ENCODE measurements at regions of chr7 and their contacts with region 1.

Region 1: DNA sequence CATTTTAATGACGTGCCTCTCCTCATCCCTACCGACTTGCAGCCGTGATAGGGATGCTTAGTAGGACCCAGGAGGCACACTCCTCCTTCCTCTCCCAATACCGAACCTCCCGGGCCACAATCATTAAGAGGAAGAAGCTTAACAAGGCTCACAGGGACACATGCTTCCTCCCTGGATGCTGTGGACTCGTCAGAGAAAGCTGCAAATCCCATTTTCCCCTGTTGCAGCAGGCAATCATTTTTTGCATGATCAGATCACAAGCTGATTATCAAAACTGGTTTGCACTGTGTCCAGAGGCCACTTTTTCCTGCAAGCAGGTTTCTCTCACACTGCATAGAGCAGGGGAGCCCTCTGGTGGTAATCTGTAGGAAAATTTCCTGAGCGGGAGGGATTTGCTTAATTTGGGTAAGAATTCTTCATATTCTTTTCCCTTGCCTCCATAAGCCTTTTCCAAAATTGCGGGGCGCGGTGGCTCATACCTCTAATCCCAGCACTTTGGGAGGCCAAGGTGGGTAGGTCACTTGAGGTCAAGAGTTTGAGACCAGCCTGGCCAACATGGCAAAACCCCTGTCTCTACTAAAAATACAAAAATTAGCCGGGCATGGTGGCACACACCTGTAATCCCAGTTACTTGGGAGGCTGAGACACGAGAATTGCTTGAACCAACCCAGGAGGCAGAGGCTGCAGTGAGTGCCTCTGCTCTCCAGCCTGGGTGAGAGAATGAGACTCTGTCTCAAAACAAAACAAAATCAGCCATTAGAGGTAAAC is 16.1 kb upstream of the LAMB4 start:
- DNase-seq: peak; percentile 71
- ATAC-seq: peak; percentile 88
- H3K4me3 ChIP-seq: peak overlapping the region in 1 of 2 experiments; percentile 43; a peak in 2 of 4 replicates
- H3K27ac ChIP-seq: no peak overlapping the region
- H3K4me1 ChIP-seq: peaks cover 4% of the 10 kb centered on the region; the same call in 1 of the 2 replicates
- H3K27me3 ChIP-seq: peaks cover 3% of the 10 kb centered on the region; the same call in 1 of the 2 replicates
- CTCF ChIP-seq: peak; percentile 96

Region 2: DNA sequence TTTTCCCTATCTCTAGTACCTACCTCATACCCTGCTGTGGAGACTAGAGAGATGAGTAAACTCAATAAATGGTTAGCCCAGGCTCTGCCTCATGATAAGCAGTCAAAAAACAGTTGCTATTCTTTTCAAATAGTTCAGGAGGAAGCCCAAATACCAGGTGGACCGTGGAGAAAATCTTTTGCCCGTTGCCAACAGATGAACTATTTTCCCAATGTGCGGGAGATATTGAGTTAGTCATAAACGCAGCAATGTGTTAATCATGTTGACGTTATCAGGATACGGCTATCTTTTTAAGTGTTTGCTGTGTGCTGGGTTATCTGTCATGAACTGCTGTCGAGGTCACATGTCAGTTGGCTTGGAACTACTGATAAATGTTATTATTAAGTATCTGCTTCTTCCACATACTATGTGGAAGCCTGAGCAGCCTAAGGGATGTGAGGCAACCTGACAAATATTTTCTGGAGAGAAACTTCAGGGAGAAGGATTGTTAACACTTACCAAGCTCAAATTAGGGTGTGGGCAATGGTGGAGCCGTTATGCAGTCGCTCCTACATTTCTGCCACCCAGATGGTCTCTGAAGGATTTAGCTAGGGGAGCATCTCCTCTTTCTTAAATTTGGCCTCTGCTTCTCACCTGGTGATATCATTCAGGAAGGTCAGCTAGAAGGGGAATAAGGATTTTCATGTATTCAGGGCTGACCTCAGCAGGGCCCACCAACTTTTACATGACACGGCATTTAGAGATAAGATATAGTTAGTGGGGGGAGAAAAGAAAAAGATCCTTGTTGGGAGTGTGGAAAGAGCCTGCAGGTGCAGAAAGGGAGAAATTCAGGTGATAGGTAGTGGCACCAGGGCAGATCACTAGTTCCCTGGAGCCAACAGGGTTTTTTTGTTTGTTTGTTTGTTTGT is 309.8 kb before region 1 on chr7:
- CTCF ChIA-PET with region 1: no interaction called
- POLR2A ChIA-PET with region 1: no interaction called
- in situ Hi-C with region 1: no loop called
- intact Hi-C with region 1: no loop called
- DNase-seq: no peak
- ATAC-seq: no peak
- H3K4me3 ChIP-seq: no peak overlapping the region
- H3K27ac ChIP-seq: no peak overlapping the region
- H3K4me1 ChIP-seq: no peaks in the 10 kb centered on the region
- H3K27me3 ChIP-seq: peaks cover 3% of the 10 kb centered on the region
- CTCF ChIP-seq: no peak

Region 3: GRCh38 chr7:107939573-107940489 is 206.4 kb before region 1 on chr7:
- CTCF ChIA-PET with region 1: no interaction called
- POLR2A ChIA-PET with region 1: no interaction called
- in situ Hi-C with region 1: no loop called
- intact Hi-C with region 1: loop called (anchors 10 kb)
- DNase-seq: no peak
- ATAC-seq: peak; percentile 68
- H3K4me3 ChIP-seq: no peak overlapping the region
- H3K27ac ChIP-seq: peak overlapping the region; percentile 78
- H3K4me1 ChIP-seq: peaks cover 29% of the 10 kb centered on the region
- H3K27me3 ChIP-seq: no peaks in the 10 kb centered on the region
- CTCF ChIP-seq: no peak

Region 4: DNA sequence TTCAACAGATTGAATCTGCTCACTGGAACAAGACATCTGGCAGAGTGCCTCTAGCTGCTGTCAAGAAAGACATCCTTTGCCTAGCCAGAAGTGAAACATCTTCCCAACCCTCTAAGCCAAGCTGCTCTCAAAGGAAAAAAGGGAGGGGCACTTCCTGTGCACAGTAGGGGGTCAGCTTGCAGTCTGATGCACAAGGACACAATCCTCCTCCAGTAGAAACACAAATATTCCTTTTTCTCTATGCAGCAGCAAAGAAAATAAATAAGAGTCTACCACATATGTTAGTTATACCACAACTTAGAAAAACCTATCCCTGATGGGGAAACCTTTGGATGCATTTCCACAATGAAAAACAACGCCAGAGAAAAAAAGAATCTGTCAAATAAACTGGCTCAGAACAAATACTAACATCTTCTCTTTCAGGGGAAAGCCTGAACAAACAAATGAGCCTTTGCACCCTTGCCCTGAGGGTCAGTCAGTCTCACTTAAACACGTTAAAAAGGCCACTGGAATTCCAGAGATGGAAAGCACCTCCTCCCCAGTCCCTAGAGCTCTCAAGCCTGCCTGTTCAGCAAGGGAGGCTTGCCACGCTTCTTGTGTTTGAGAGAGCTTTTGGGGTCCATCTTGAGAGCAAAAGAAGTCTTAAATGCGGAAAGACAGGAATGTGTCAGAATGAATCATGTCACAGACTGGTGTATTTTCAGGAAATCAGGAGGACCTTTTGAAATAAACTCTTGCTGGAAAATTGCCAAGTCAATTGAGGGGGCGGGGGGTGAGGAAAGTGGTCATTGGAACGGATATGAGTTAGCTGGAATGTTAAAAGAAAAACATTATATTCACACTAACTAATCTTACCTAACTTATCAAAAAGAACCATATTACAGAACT is 150.8 kb before region 1 on chr7:
- CTCF ChIA-PET with region 1: interaction called, 11 read pairs
- POLR2A ChIA-PET with region 1: no interaction called
- in situ Hi-C with region 1: no loop called
- intact Hi-C with region 1: loop called (anchors 5 kb)
- DNase-seq: no peak
- ATAC-seq: peak; percentile 86
- H3K4me3 ChIP-seq: no peak overlapping the region
- H3K27ac ChIP-seq: peak overlapping the region; percentile 90
- H3K4me1 ChIP-seq: peaks cover 67% of the 10 kb centered on the region
- H3K27me3 ChIP-seq: no peaks in the 10 kb centered on the region
- CTCF ChIP-seq: no peak

Region 5: DNA sequence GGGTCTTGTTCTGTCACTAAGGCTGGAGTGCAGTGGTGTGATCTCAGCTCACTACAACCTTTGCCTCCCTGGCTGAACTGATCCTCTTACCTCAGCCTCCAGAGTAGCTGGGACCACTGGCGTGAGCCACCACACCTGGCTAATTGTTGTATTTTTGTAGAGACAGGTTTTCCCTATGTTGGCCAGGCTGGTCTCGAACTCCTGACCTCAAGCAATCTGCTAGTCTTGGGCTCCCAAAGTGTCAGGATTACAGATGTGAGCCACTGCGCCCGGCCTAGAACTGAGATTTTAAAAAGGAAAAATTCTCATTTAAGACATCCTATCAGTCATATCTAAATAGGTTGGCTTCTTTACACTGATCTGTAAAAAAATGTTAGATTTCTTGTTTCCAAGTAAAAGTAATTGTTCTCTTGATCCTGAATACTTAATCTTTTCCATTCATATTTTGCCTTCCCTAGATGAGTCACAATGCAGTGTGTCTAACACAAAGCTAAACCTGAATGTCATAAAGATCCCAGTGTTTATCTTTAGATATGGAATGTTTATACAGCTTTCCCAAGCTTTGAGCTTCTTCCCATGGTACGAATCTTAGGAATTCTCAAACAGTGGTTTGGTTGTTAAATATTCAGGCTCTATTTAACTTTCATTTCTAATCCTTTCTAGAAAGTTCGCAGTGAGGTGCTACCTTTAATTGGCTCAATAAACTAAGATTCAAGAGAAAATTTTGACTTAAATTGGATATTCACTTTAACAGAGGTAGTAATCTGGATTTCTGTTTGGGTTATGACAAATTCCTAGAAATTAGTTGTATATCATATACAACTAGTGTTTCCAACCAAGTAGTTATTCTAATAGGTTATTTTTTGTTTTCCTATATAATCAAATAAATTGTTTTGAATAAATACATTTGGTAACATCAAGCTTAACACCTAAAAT is 131.2 kb before region 1 on chr7:
- CTCF ChIA-PET with region 1: no interaction called
- POLR2A ChIA-PET with region 1: no interaction called
- in situ Hi-C with region 1: no loop called
- intact Hi-C with region 1: no loop called
- DNase-seq: no peak
- ATAC-seq: peak; percentile 83
- H3K4me3 ChIP-seq: no peak overlapping the region
- H3K27ac ChIP-seq: peak overlapping the region; percentile 71
- H3K4me1 ChIP-seq: peaks cover 67% of the 10 kb centered on the region
- H3K27me3 ChIP-seq: no peaks in the 10 kb centered on the region
- CTCF ChIP-seq: no peak

Region 6: DNA sequence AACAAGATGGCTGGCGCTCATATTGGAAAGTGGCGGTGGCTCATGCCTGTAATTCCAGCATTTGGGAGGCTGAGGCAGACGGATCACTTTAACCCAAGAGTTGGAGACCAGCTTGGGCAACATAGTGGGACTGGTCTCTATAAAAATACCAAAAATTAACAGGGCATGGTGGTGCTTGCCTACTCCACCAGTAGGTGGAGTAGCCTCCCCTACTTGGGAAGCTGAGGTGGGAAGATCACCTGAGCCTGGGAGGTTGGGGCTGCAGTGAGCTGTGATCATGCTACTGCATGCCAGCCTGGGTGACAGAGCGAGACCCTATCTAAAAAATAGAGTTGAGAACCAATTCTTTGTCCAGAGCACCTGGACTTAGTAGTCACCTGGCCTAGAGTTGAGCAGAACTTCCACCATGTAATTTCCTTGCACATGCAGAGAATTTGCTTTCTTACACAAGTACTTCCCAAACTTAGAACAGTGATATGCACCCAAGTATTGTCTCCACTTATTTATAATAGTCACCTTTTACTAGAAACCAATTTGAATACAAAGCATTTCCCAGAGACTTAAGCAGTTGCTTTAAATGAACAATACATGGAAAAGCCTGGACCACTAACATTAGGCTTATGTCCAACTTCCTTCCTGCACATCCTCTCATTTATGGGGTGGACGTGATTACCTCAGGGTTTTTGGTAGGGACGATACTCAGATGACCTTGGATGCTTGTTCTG is 32.0 kb before region 1 on chr7:
- CTCF ChIA-PET with region 1: interaction called, 3 read pairs
- POLR2A ChIA-PET with region 1: no interaction called
- in situ Hi-C with region 1: no loop called
- intact Hi-C with region 1: loop called (anchors 5 kb)
- DNase-seq: no peak
- ATAC-seq: no peak
- H3K4me3 ChIP-seq: no peak overlapping the region
- H3K27ac ChIP-seq: no peak overlapping the region
- H3K4me1 ChIP-seq: no peaks in the 10 kb centered on the region
- H3K27me3 ChIP-seq: no peaks in the 10 kb centered on the region
- CTCF ChIP-seq: peak; percentile 61

Region 7: GRCh38 chr7:108203537-108203936 is 57.3 kb after region 1 on chr7:
- CTCF ChIA-PET with region 1: no interaction called
- POLR2A ChIA-PET with region 1: no interaction called
- in situ Hi-C with region 1: no loop called
- intact Hi-C with region 1: no loop called
- DNase-seq: no peak
- ATAC-seq: no peak
- H3K4me3 ChIP-seq: no peak overlapping the region
- H3K27ac ChIP-seq: no peak overlapping the region
- H3K4me1 ChIP-seq: no peaks in the 10 kb centered on the region
- H3K27me3 ChIP-seq: peaks cover 5% of the 10 kb centered on the region; the same call in 1 of the 2 replicates
- CTCF ChIP-seq: no peak